Left cardiac atrium (tissue), 4 donors: ENCODE measurements at regions of chr4 and their contacts with region 1.

Region 1: GRCh38 chr4:90293320-90293719 is 166.1 kb downstream of the CCSER1 start:
- DNase-seq: no peak
- ATAC-seq: no peak

Region 2: GRCh38 chr4:89213062-89213701 is 1080.1 kb before region 1 on chr4:
- intact Hi-C with region 1: loop called in 1 of 2 experiments (anchors 10 kb)
- DNase-seq: no peak
- ATAC-seq: no peak

Region 3: GRCh38 chr4:89640620-89641366 is 652.5 kb before region 1 on chr4:
- intact Hi-C with region 1: no loop called
- DNase-seq: peak; percentile 31
- ATAC-seq: peak; percentile 44 to 82

Region 4: DNA sequence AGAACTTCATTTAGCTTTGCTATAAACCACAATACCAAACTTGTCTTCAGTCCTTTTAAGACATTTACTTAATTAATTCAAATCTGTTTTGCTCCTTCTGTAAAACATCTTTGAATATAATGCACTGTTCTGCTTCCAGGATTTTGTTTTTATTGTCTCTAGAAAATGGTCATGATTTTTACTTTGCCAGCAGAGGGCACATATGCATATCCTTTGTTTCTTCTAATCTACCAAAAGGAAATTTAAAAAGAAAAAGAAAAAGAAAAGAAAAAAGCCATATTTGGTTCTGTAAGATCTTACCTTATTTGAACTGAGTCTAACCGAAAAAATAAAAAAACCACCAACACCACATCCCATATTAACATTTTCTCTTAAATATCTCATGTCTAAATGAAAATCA is 268.1 kb before region 1 on chr4:
- intact Hi-C with region 1: loop called in 1 of 2 experiments (anchors 5 kb)
- DNase-seq: no peak
- ATAC-seq: no peak

Region 5: GRCh38 chr4:90118527-90119195 is 174.7 kb before region 1 on chr4:
- intact Hi-C with region 1: loop called (anchors 2 to 10 kb)
- DNase-seq: no peak
- ATAC-seq: no peak

Region 6: DNA sequence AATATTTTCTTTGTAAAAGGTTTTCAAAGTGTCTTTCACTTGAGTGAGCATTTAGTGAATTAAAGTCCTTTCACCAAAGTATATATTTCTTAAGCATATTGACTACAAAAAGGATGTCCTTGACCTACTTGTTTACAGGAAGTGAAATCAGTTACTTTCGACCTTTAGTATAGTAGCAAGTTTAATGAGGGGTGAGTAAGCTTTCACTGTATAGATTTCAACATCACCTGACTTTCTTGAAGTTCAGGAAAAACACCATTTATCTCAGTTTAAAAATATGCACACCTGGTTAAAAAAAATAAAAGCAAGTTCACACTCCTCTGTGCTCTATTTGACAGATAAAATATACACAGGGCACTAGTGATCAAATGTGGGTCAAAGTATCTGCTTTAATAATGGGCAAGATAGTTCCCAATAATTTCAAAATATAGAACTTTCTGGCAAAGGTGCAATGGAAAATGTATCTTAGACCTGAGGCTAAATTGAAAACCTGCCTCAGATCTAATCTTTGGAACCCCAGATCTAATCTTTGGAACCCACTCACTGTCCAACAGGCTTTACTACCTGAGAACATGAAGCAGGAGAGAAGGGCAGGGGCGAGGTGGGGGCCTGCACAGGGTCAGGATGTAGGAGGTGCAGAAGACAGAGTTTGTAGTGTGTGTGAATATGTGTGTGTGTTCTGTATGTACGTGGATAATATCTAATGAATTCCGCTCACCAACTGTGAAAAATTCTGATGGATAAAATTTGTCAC is 77.9 kb before region 1 on chr4:
- intact Hi-C with region 1: no loop called
- DNase-seq: no peak
- ATAC-seq: no peak